ENCODE measurements at regions of chr12 and their contacts with region 1.

Region 1: GRCh38 chr12:52050761-52051541 is at the start of gene NR4A1:
- DNase-seq: peak; percentile 85
- ATAC-seq: peak; percentile 83
- H3K4me3 ChIP-seq: peak within 1 kb of the TSS; percentile 82 to 98 (median 89)
- H3K27ac ChIP-seq: peak within 1 kb of the TSS; percentile 90
- H3K4me1 ChIP-seq: peaks cover 53% of the 10 kb centered on the region
- H3K27me3 ChIP-seq: no peaks in the 10 kb centered on the region
- CTCF ChIP-seq: peak; percentile 69
- EP300 ChIP-seq: no peak
- POLR2A ChIP-seq: peak; percentile 89 to 93
- RAD21 ChIP-seq: 0 out of 2 replicates have a peak, but pooled peaks have one; percentile 22
- total RNA-seq, gene NR4A1: 4.6 and 5.7 TPM in 2 replicates

Region 2: DNA sequence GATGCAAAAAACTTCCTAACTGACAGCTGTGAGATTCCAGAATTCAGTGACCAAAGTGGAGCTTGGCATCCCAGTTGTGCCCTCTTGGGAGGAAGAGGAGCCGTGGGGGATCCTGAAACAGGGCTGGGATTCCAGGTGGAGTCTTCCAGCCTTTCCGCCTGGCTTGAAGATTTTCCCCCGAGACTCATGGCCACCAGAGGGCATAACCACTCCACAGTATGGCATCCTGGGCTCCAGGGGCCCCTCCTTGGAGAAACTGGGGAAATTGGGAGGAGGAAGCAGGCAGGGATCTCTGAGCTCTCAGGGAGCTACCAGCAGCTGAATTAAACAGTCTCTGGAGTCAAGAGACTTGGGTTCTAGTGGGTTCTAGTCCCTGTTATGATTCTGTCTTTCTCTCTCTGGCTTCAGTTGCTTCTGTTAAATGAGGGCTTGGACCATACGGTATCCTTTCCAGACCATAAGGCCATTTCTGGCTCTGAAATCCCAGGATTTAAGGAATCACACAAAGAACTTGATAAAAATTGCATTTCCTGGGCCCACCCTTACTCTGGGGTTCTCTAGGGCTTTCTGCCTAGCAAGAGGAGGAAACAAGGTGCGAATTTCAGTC is 46.8 kb before region 1 on chr12:
- CTCF ChIA-PET with region 1: no interaction called
- POLR2A ChIA-PET with region 1: no interaction called
- in situ Hi-C with region 1: no loop called
- intact Hi-C with region 1: no loop called
- DNase-seq: peak; percentile 40
- ATAC-seq: peak; percentile 63
- H3K4me3 ChIP-seq: no peak overlapping the region
- H3K27ac ChIP-seq: no peak overlapping the region
- H3K4me1 ChIP-seq: peaks cover 14% of the 10 kb centered on the region
- H3K27me3 ChIP-seq: 0 out of 5 replicates have a peak, but pooled peaks cover 0 to 1% of the 10 kb centered on the region in 2 experiments
- CTCF ChIP-seq: peak; percentile 88
- EP300 ChIP-seq: no peak
- POLR2A ChIP-seq: no peak
- RAD21 ChIP-seq: peak; percentile 87

Region 3: DNA sequence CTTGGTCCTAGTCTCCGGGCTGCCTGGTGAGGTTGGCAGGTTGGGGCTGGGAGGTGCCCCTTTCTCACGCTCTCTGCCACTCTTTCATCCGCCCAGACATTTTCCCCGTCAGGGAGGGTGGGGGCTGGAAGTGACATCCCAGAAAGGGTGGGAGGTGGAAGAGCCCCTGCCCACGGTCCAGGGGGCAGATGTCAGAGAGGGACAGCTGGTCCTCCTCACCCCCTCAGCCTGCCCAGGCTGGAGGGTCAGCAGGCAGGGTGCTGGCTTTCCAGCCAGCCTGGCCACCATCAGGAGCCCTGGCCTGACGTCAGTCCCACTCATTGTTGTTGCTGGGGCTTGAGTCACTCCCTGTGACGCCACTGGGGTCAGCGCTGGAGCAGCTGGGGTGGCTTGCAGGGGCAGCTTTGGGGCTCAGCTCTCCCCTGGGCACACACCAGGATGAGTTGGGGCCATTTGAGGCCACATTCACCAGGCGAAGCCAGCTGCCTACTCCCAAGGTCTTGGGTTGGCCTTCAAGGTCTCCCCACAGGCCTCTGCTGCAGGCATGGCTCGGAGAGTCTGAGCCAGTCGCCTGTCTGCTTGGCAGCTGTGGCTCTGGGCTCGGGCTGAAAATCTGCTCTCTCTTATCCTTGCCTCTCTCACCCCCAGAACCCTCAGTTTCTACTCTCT is 13.2 kb after region 1 on chr12:
- CTCF ChIA-PET with region 1: no interaction called
- POLR2A ChIA-PET with region 1: interaction called, 58 read pairs
- in situ Hi-C with region 1: no loop called
- intact Hi-C with region 1: no loop called
- DNase-seq: no peak
- ATAC-seq: no peak
- H3K4me3 ChIP-seq: no peak overlapping the region
- H3K27ac ChIP-seq: no peak overlapping the region
- H3K4me1 ChIP-seq: peaks cover 64% of the 10 kb centered on the region
- H3K27me3 ChIP-seq: no peaks in the 10 kb centered on the region; a peak in 1 of 5 replicates
- CTCF ChIP-seq: no peak
- EP300 ChIP-seq: no peak
- POLR2A ChIP-seq: no peak
- RAD21 ChIP-seq: no peak

Region 4: GRCh38 chr12:52069327-52070184 is 18.6 kb after region 1 on chr12 and contains the start of gene ATG101:
- CTCF ChIA-PET with region 1: no interaction called
- POLR2A ChIA-PET with region 1: interaction called, 36 read pairs
- in situ Hi-C with region 1: no loop called
- intact Hi-C with region 1: loop called (anchors 2 kb)
- DNase-seq: peak; percentile 90
- ATAC-seq: peak; percentile 97
- H3K4me3 ChIP-seq: peak within 1 kb of the TSS; percentile 87 to 98 (median 88)
- H3K27ac ChIP-seq: peak within 1 kb of the TSS; percentile 85
- H3K4me1 ChIP-seq: peaks cover 46% of the 10 kb centered on the region
- H3K27me3 ChIP-seq: no peaks in the 10 kb centered on the region; a peak in 1 of 5 replicates
- CTCF ChIP-seq: peak; percentile 93
- EP300 ChIP-seq: peak in 1 of 2 experiments; percentile 22; a peak in 1 of 4 replicates
- POLR2A ChIP-seq: peak; percentile 72 to 77
- RAD21 ChIP-seq: peak; percentile 54; the same call in 1 of the 2 replicates
- total RNA-seq, gene ATG101: 66.7 and 67.7 TPM in 2 replicates